Activated CD4-positive, alpha-beta memory T cell treated with anti-CD3 and anti-CD28 coated beads for 36 hours (primary cell): ENCODE measurements at regions of chr6 and their contacts with region 1.

Region 1: GRCh38 chr6:11414176-11414963 is 123.2 kb upstream of the TMEM170B start:
- DNase-seq: peak; percentile 63
- H3K4me3 Mint-ChIP-seq: no peak overlapping the region
- H3K27ac Mint-ChIP-seq: no peak overlapping the region
- H3K4me1 Mint-ChIP-seq: peaks cover 48% of the 10 kb centered on the region
- H3K27me3 Mint-ChIP-seq: no peaks in the 10 kb centered on the region

Region 2: DNA sequence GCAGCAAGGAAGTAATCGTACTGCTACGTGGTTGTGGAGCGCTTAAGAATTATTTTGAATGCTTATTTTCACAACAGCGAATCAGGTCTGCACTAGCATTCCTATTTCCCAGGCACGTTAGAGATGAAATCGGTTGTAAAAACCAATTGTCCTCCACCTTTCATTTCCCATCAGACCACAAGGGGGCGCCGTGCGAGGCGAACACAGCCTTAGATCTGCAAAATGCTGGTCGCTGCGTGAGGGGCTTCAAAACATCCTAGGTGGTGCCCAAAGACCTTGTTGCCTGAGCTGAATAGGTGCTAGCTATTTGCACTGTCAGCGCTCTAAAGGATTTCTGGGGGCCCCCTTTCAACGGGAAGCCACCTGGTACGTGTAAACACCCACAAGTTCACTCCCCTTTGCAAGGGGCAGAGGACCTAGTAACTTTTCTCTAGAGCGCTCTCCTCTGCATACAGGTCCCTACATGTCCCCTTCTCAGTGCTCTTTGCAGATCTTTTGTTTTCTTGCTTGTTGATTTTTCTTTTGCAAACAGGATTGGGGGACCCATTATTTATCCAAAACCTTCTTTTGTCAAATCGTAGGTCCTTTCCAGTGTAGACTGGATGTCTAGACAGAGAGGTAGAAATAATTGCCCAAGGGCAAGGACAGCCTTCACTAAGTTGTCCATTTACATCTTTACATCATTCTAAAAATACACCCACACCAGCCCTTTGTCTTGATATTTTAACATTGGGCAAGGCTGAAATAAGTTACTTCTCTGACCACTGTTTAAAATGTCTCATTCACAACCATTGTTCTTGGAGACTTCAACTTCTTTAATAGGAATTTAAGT is 241.7 kb before region 1 on chr6:
- CTCF ChIA-PET with region 1: interaction called, 12 read pairs
- POLR2A ChIA-PET with region 1: no interaction called
- intact Hi-C with region 1: loop called (anchors 5 kb)
- DNase-seq: peak; percentile 81
- H3K4me3 Mint-ChIP-seq: peak overlapping the region; percentile 16
- H3K27ac Mint-ChIP-seq: no peak overlapping the region
- H3K4me1 Mint-ChIP-seq: peaks cover 16% of the 10 kb centered on the region
- H3K27me3 Mint-ChIP-seq: no peaks in the 10 kb centered on the region

Region 3: DNA sequence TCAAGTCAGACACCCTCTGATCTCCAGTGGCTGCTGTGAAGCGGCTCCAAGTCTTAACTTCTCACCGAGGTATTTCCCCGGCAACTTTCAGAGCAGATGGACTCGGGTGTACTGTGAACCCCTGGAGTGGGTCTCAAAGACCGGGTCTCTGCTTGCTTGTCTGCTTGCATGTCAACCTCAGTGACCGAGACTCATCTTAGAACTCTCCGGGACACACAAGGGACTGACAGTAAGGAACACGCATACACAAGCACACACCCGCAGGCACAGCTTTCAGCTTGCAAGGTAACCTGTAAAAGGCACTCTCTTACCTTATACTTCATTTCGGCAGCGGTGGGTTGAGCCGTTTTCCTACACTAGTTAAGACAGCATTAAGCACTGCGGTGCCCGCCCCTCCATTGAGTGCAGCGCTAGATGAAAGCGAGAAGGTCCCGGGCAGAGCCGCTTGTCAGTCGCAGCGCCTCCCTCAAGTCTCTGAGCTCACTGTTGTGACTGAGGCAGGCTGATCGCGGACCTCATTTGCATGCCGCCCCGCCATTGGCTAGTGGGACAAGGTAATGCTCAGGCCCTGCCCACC is 182.1 kb before region 1 on chr6 and contains the start of gene NEDD9:
- CTCF ChIA-PET with region 1: interaction called, 5 read pairs
- POLR2A ChIA-PET with region 1: interaction called, 9 read pairs
- intact Hi-C with region 1: loop called (anchors 1 kb)
- DNase-seq: peak; percentile 98
- H3K4me3 Mint-ChIP-seq: peak within 1 kb of the TSS; percentile 81
- H3K27ac Mint-ChIP-seq: peak within 1 kb of the TSS; percentile 96
- H3K4me1 Mint-ChIP-seq: peaks cover 65% of the 10 kb centered on the region
- H3K27me3 Mint-ChIP-seq: no peaks in the 10 kb centered on the region
- total RNA-seq, gene NEDD9: 26.6 to 31.5 TPM

Region 4: GRCh38 chr6:11251541-11252360 is 162.6 kb before region 1 on chr6:
- CTCF ChIA-PET with region 1: no interaction called
- POLR2A ChIA-PET with region 1: no interaction called
- intact Hi-C with region 1: no loop called
- DNase-seq: no peak
- H3K4me3 Mint-ChIP-seq: no peak overlapping the region
- H3K27ac Mint-ChIP-seq: no peak overlapping the region
- H3K4me1 Mint-ChIP-seq: peaks cover 8% of the 10 kb centered on the region
- H3K27me3 Mint-ChIP-seq: no peaks in the 10 kb centered on the region

Region 5: DNA sequence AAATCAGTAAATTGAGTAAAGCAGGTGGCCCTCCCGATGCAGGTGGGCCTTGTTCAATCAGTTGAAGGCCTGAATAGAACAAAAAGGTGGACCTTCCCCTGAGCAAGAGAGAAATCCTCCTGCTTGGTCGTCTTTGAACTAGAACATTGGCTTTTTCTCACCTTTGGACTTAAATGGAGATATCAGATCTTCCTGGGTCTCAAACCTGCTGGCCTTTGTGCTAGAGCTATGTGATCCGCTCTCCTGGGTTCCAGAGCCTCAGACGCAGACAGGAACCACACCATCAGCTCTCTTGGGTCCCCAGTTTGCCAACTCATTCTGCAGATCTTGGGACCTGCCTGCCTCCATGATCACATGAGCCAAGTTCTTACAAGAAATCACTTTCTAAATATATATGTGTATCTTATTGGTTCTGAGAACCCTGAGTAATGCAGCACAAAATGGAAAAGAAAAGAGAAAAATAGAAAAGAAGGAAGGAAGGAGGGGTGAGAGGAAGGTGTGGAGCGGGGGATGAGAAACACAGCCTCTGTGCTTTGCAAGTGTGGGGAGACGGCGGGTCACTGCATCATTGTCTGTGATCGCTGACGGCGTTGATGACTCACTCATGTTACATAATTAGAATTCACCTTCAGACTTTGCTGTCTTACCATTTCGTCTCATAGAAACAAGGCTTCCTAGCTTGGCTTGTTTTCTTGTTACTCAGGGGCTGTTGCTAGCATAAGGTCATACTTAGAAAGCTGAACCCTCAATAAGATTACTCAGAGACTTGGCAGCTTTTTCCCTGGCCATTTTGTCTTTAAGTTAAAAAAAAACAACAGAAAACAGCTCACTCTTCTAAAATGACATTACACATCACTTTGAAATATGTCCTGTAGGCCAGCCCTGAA is 96.2 kb before region 1 on chr6:
- CTCF ChIA-PET with region 1: interaction called, 3 read pairs
- POLR2A ChIA-PET with region 1: no interaction called
- intact Hi-C with region 1: loop called (anchors 1 kb)
- DNase-seq: peak; percentile 88
- H3K4me3 Mint-ChIP-seq: peak overlapping the region; percentile 14
- H3K27ac Mint-ChIP-seq: peak overlapping the region; percentile 92
- H3K4me1 Mint-ChIP-seq: peaks cover 63% of the 10 kb centered on the region
- H3K27me3 Mint-ChIP-seq: no peaks in the 10 kb centered on the region

Region 6: DNA sequence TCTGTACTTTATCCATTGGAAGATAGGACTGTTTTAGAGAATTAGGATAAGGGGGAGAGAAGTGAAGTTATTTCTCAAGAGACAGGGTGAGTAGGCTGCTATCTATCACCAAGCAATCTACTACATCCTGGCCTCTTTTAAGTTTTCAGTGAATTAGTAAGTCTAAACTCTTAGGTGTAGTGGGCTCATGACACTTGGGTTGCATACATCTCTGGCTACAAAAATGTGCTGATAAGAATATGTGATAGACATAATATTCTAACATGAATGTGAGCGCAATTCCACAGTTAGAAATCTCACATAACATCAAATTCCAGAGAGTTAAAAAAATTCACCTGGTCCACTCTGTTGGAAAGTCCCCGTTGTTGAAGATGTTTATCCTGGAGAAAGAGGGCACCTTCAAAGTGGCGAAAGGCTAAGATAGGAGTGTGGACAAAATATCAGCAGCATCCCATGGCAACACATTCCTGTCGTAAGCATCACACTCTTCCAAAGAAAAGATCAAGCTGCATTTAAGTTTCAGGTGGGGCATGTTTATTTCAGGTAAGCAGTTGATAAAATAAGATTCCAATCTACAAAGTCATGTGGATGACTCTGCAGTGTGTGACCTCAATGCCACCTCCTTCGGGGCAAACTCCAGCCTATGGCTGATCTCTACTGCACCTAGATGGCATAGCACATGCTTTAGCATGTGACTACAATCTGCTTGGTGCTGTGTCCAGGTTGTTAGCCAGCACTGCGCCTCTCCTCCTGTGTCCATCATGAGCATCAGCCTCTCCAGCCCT is 70.2 kb before region 1 on chr6:
- CTCF ChIA-PET with region 1: interaction called, 3 read pairs
- POLR2A ChIA-PET with region 1: no interaction called
- intact Hi-C with region 1: loop called (anchors 1 kb)
- DNase-seq: no peak
- H3K4me3 Mint-ChIP-seq: no peak overlapping the region
- H3K27ac Mint-ChIP-seq: peak overlapping the region; percentile 61
- H3K4me1 Mint-ChIP-seq: peaks cover 78% of the 10 kb centered on the region
- H3K27me3 Mint-ChIP-seq: no peaks in the 10 kb centered on the region

Region 7: GRCh38 chr6:11460001-11460668 is 45.8 kb after region 1 on chr6:
- CTCF ChIA-PET with region 1: interaction called, 4 read pairs
- POLR2A ChIA-PET with region 1: interaction called, 20 read pairs
- intact Hi-C with region 1: loop called (anchors 1 kb)
- DNase-seq: peak; percentile 23
- H3K4me3 Mint-ChIP-seq: peak overlapping the region; percentile 57
- H3K27ac Mint-ChIP-seq: peak overlapping the region; percentile 90
- H3K4me1 Mint-ChIP-seq: peaks cover 31% of the 10 kb centered on the region
- H3K27me3 Mint-ChIP-seq: no peaks in the 10 kb centered on the region